ENCODE measurements at regions of chr1 and their contacts with region 1.

Region 1: GRCh38 chr1:67500413-67500959 is 70.3 kb upstream of the SERBP1 start:
- DNase-seq: peak; percentile 93
- H3K4me3 Mint-ChIP-seq: no peak overlapping the region
- H3K27ac Mint-ChIP-seq: no peak overlapping the region
- H3K4me1 Mint-ChIP-seq: peaks cover 2% of the 10 kb centered on the region
- H3K27me3 Mint-ChIP-seq: peaks cover 6% of the 10 kb centered on the region

Region 2: DNA sequence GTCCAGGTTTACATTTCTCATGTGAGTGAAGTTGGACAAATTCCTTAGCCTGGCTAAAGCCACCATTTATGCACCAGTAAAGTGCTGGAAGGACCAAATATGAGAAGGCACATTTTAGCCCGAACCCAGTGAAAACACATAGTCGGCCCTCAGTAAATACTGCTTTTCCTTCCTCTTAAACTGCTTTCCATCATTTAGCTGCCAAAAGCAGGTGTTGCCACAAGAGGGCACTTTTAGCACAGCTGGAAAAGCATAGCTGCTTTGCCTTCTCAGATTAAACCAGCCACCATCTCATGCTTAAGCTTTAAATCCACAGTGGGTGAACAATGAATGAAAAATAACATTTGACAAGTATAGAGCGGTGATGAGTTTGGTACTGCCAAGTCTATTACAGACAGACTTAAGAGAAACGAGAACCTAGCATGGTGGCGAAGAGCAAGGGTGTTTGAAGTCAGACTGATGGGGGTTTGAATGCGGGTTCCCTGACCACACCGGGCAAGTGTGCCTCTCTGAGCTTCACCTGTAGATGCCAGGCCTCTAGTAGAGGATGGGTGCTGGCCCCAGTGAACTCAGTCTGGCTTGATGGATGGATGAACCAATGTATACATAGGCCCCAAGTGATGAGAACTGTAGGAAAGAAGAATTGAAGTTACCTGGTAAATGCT is 504.3 kb before region 1 on chr1:
- CTCF ChIA-PET with region 1: interaction called, 10 read pairs
- POLR2A ChIA-PET with region 1: no interaction called
- intact Hi-C with region 1: loop called (anchors 1 kb)
- DNase-seq: peak; percentile 78
- H3K4me3 Mint-ChIP-seq: no peak overlapping the region
- H3K27ac Mint-ChIP-seq: peak overlapping the region; percentile 25
- H3K4me1 Mint-ChIP-seq: peaks cover 16% of the 10 kb centered on the region
- H3K27me3 Mint-ChIP-seq: no peaks in the 10 kb centered on the region

Region 3: GRCh38 chr1:67149179-67149770 is 351.2 kb before region 1 on chr1:
- CTCF ChIA-PET with region 1: interaction called, 11 read pairs
- POLR2A ChIA-PET with region 1: no interaction called
- intact Hi-C with region 1: loop called (anchors 5 kb)
- DNase-seq: peak; percentile 77
- H3K4me3 Mint-ChIP-seq: no peak overlapping the region
- H3K27ac Mint-ChIP-seq: no peak overlapping the region
- H3K4me1 Mint-ChIP-seq: peaks cover 28% of the 10 kb centered on the region
- H3K27me3 Mint-ChIP-seq: peaks cover 10% of the 10 kb centered on the region

Region 4: DNA sequence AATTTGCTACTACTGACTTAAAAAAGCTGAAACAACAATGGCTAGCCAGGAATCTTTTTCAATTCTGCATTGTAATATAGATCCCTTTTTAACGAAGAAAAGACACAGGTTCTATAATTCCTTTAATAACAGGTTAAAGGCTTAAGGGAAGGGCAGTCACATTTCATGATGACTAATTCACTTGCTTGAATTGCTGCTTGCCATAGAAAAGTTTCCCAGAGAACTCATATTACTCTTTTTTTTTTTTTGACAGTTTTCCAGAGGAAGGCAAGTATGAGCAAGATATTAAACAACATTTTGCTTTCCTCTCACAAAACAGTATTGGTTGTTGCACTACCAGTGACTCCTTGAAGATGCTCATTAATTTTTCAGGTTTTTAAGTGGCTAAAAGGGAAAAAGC is 273.3 kb before region 1 on chr1:
- CTCF ChIA-PET with region 1: interaction called, 11 read pairs
- POLR2A ChIA-PET with region 1: no interaction called
- intact Hi-C with region 1: no loop called
- DNase-seq: no peak
- H3K4me3 Mint-ChIP-seq: no peak overlapping the region
- H3K27ac Mint-ChIP-seq: no peak overlapping the region
- H3K4me1 Mint-ChIP-seq: peaks cover 6% of the 10 kb centered on the region
- H3K27me3 Mint-ChIP-seq: peaks cover 1% of the 10 kb centered on the region

Region 5: DNA sequence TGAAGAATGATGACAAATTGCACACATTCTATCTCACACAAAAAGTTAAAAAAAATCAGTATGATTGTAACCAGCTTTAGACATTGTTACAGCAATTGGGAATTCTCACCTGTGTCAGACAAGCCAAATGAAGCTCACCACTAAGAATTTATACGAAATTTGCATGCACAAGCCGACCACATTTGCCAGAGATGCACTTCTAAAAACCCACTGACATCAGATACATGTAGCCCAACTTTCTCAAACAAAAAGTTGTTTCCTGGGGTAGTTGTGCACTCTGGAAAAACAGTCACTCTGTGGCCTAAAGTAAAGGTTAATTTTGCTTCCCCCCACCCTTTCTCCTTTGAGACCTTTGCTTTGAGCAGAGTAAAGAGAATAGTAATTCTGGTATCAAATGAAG is 260.7 kb before region 1 on chr1:
- CTCF ChIA-PET with region 1: interaction called, 10 read pairs
- POLR2A ChIA-PET with region 1: no interaction called
- intact Hi-C with region 1: loop called (anchors 1 kb)
- DNase-seq: no peak
- H3K4me3 Mint-ChIP-seq: no peak overlapping the region
- H3K27ac Mint-ChIP-seq: no peak overlapping the region
- H3K4me1 Mint-ChIP-seq: peaks cover 12% of the 10 kb centered on the region
- H3K27me3 Mint-ChIP-seq: peaks cover 2% of the 10 kb centered on the region

Region 6: GRCh38 chr1:67489643-67490042 is 10.8 kb before region 1 on chr1:
- CTCF ChIA-PET with region 1: interaction called, 20 read pairs
- POLR2A ChIA-PET with region 1: no interaction called
- intact Hi-C with region 1: no loop called
- DNase-seq: peak; percentile 12
- H3K4me3 Mint-ChIP-seq: no peak overlapping the region
- H3K27ac Mint-ChIP-seq: no peak overlapping the region
- H3K4me1 Mint-ChIP-seq: peaks cover under 1% of the 10 kb centered on the region
- H3K27me3 Mint-ChIP-seq: no peaks in the 10 kb centered on the region